Spleen (tissue), 13 donors: ENCODE measurements at regions of chr7 and their contacts with region 1.

Region 1: DNA sequence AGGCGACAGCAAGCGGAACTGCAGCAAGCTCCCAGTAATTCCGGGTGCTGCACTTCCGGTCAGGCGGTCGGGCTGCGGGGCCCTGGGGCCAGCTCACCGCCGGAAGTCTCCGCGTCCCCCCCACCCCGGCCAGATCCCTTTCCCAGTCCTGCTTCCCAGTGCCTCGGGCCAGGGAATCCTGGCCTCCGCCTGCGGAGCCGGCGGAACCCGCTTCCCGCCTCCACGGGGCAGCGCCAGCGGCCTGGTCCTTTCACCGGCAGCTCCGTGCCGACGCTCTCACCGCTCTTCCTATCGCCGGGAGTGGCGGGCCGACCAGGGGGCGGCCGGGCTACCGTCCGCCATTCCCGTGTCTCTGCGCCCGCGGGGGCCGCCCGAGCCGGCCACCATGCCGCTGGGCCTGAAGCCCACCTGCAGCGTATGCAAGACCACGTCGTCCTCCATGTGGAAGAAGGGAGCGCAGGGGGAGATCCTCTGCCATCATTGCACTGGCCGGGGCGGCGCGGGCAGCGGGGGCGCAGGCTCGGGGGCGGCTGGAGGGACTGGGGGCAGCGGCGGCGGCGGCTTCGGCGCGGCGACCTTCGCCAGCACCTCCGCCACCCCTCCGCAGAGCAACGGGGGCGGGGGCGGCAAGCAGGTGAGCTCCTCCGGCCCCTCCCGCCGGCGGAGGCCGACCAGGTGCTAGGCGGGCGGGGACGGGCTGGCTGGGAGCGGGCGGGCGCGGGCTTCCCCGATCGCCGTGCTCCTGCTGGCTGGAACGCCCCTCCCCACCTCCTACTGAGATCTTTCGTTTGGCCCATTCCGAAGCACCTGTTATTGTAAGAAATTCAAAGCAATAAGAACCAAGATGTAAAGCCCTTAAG is at the start of gene GATAD1:
- DNase-seq: peak; percentile 96
- H3K4me3 ChIP-seq: peak within 1 kb of the TSS; percentile 57 to 98 (median 93)
- H3K27ac ChIP-seq: peak within 1 kb of the TSS; percentile 89 to 99 (median 99)
- H3K4me1 ChIP-seq: peaks cover 4 to 28% (median 22%) of the 10 kb centered on the region in 6 donors
- H3K27me3 ChIP-seq: no peaks in the 10 kb centered on the region
- CTCF ChIP-seq: peak; percentile 94 to 98 (median 96)
- POLR2A ChIP-seq: peak in 2 of 3 donors; percentile 12 to 35
- total RNA-seq, gene GATAD1: 23.3 to 56.9 (median 43.4) TPM

Region 2: GRCh38 chr7:91826377-91826776 is 621.2 kb before region 1 on chr7:
- intact Hi-C with region 1: loop called (anchors 10 kb)
- DNase-seq: no peak
- H3K4me3 ChIP-seq: no peak overlapping the region
- H3K27ac ChIP-seq: no peak overlapping the region
- H3K4me1 ChIP-seq: peaks cover 0 to 5% (median 0%) of the 10 kb centered on the region in 6 donors
- H3K27me3 ChIP-seq: no peaks in the 10 kb centered on the region
- CTCF ChIP-seq: no peak
- POLR2A ChIP-seq: no peak